ENCODE measurements at regions of chr1 and their contacts with region 1.

Region 1: DNA sequence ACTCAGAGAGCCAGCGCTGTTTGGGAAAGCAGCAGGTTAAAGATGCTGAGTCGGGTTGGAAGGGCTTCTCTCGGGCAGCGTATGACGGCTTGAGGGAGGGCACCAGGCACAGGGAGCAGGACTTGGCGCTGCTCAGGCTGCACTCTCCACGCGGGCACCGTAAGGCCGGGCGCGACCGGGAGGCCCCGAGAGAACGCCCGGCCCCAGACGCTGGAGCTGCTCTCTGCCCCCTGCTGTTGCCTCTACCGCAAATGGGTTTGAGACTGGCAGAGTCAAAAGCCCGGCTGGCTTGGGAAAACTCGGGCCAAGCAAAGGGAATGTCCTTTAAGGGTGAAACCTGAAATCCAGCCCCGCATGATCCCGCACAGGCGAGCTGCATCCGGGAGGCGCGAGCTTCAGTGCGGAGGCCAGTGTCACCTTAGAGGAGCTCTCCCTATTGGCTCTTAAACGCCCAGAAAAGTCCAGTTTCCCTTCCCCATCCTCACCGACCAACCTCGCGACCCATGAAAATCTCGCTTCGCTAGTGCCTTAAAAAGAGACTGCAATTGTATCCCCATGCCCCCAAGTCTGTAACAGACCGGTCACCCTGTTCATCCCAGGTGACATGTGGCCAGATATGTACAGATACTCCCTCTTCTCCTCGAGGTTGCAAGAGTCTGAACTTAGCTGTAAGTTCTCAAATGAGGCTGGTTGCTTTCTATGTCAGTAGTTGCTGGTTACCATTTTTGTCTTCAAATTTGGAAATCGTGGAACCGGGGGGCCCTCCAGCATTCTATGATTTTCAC is 1.1 kb downstream of the PRRX1 start:
- DNase-seq: peak; percentile 43
- H3K4me3 ChIP-seq: peak overlapping the region; percentile 36 to 63 (median 46)
- H3K27ac ChIP-seq: no peak overlapping the region
- H3K4me1 ChIP-seq: peaks cover 17% of the 10 kb centered on the region
- H3K27me3 ChIP-seq: peaks cover 50% of the 10 kb centered on the region in 2 experiments
- CTCF ChIP-seq: peak in 1 of 2 donors; percentile 55
- POLR2A ChIP-seq: no peak

Region 2: GRCh38 chr1:170010443-170010842 is 654.6 kb before region 1 on chr1:
- CTCF ChIA-PET with region 1: no interaction called
- POLR2A ChIA-PET with region 1: no interaction called
- dilution Hi-C with region 1: no loop called
- intact Hi-C with region 1: loop called (anchors 10 kb)
- DNase-seq: peak; percentile 48
- H3K4me3 ChIP-seq: no peak overlapping the region
- H3K27ac ChIP-seq: no peak overlapping the region
- H3K4me1 ChIP-seq: no peaks in the 10 kb centered on the region
- H3K27me3 ChIP-seq: no peaks in the 10 kb centered on the region
- CTCF ChIP-seq: no peak
- POLR2A ChIP-seq: no peak

Region 3: DNA sequence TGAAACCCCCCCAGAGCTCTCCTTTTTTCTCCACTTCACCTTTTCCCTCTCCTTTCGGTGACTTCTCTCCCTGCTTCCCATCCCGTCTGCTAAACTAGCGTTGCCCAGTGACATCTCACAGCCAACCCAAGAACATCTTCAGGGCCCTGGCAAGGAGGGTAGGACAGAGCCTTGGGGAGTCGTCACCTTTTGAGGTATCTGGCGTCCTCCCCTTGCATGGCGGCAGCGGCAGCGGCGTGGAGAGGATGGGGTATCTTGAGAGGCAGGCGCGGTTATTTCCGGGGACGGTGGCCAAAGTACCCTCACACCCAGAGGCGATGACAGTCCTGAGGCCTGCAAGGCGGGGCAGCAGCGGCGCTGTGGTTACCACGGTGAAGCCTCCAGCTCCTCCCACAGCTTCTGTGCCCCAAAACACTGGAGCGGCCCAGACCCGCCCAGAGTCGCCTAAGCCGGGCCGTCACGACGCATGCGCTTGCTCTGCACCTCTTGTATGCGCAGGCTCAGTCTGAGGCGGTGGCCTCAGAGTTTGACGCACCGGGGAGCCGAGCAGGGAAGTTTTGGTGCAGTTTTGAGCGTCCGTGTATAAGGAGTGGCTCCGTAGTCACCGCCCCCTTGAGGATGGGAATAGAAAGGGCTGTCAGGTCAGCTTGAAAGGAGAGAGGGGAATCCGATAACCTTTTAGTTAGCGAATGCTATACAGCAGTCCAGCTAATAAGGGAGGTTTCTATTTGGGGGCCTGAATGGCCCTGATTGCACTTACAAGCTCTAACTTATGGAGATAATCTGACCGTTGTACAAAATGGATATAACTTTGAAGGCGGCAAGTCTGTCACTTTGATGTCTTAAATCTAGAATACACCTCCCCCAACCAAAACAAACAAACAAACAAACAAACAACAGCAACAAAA is 590.5 kb before region 1 on chr1 and contains the start of gene KIFAP3:
- CTCF ChIA-PET with region 1: no interaction called
- POLR2A ChIA-PET with region 1: no interaction called
- dilution Hi-C with region 1: no loop called
- intact Hi-C with region 1: loop called (anchors 10 kb)
- DNase-seq: peak; percentile 98
- H3K4me3 ChIP-seq: peak within 1 kb of the TSS; percentile 41 to 77 (median 65)
- H3K27ac ChIP-seq: peak within 1 kb of the TSS; percentile 2
- H3K4me1 ChIP-seq: peaks cover 7% of the 10 kb centered on the region
- H3K27me3 ChIP-seq: no peaks in the 10 kb centered on the region
- CTCF ChIP-seq: peak; percentile 45 to 57
- POLR2A ChIP-seq: no peak
- total RNA-seq, gene KIFAP3: 17.5 and 19.6 TPM in 2 replicates

Region 4: GRCh38 chr1:170436928-170437327 is 228.1 kb before region 1 on chr1:
- CTCF ChIA-PET with region 1: no interaction called
- POLR2A ChIA-PET with region 1: no interaction called
- dilution Hi-C with region 1: no loop called
- intact Hi-C with region 1: loop called (anchors 10 kb)
- DNase-seq: peak; percentile 28
- H3K4me3 ChIP-seq: no peak overlapping the region
- H3K27ac ChIP-seq: no peak overlapping the region
- H3K4me1 ChIP-seq: no peaks in the 10 kb centered on the region
- H3K27me3 ChIP-seq: no peaks in the 10 kb centered on the region
- CTCF ChIP-seq: peak in 1 of 2 donors; percentile 27
- POLR2A ChIP-seq: no peak

Region 5: DNA sequence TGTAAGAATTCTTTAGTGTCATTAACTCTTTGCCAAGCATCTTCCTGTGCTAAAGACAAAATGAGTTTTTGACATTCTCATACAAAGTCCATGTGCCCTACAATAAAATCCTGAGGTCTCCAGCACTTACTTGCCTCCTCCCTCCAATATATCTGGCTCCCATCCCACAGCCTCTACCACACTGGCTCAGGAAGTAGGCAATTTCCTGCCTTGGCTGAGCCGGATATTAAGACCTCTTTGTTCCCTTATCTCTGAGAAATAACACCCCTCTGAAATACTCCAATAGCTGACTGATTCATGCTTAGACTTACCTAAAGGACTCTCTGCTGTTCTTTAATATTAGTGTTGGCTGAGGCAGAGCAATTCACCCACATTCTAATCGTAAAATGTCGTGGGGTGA is 170.7 kb before region 1 on chr1:
- CTCF ChIA-PET with region 1: no interaction called
- POLR2A ChIA-PET with region 1: no interaction called
- dilution Hi-C with region 1: no loop called
- intact Hi-C with region 1: loop called (anchors 2 kb)
- DNase-seq: peak; percentile 91
- H3K4me3 ChIP-seq: peak overlapping the region in 1 of 3 experiments; percentile 10
- H3K27ac ChIP-seq: peak overlapping the region; percentile 33
- H3K4me1 ChIP-seq: peaks cover 20% of the 10 kb centered on the region
- H3K27me3 ChIP-seq: no peaks in the 10 kb centered on the region
- CTCF ChIP-seq: no peak
- POLR2A ChIP-seq: no peak

Region 6: GRCh38 chr1:170531758-170532657 is 133.0 kb before region 1 on chr1 and contains the start of gene GORAB:
- CTCF ChIA-PET with region 1: no interaction called
- POLR2A ChIA-PET with region 1: interaction called, 5 read pairs
- dilution Hi-C with region 1: no loop called
- intact Hi-C with region 1: loop called (anchors 1 kb)
- DNase-seq: peak; percentile 94
- H3K4me3 ChIP-seq: peak within 1 kb of the TSS; percentile 50 to 78 (median 65)
- H3K27ac ChIP-seq: peak within 1 kb of the TSS; percentile 87
- H3K4me1 ChIP-seq: peaks cover 14% of the 10 kb centered on the region
- H3K27me3 ChIP-seq: peaks cover 5 to 12% of the 10 kb centered on the region in 2 experiments
- CTCF ChIP-seq: no peak
- POLR2A ChIP-seq: peak; percentile 79
- total RNA-seq, gene GORAB: 6.4 and 7.7 TPM in 2 replicates

Region 7: GRCh38 chr1:170807432-170807831 is 142.4 kb after region 1 on chr1:
- CTCF ChIA-PET with region 1: no interaction called
- POLR2A ChIA-PET with region 1: no interaction called
- dilution Hi-C with region 1: no loop called
- intact Hi-C with region 1: no loop called
- DNase-seq: no peak
- H3K4me3 ChIP-seq: no peak overlapping the region
- H3K27ac ChIP-seq: no peak overlapping the region
- H3K4me1 ChIP-seq: no peaks in the 10 kb centered on the region
- H3K27me3 ChIP-seq: no peaks in the 10 kb centered on the region
- CTCF ChIP-seq: no peak
- POLR2A ChIP-seq: no peak